Aorta (tissue), 5 donors: ENCODE measurements at regions of chr14 and their contacts with region 1.

Region 1: DNA sequence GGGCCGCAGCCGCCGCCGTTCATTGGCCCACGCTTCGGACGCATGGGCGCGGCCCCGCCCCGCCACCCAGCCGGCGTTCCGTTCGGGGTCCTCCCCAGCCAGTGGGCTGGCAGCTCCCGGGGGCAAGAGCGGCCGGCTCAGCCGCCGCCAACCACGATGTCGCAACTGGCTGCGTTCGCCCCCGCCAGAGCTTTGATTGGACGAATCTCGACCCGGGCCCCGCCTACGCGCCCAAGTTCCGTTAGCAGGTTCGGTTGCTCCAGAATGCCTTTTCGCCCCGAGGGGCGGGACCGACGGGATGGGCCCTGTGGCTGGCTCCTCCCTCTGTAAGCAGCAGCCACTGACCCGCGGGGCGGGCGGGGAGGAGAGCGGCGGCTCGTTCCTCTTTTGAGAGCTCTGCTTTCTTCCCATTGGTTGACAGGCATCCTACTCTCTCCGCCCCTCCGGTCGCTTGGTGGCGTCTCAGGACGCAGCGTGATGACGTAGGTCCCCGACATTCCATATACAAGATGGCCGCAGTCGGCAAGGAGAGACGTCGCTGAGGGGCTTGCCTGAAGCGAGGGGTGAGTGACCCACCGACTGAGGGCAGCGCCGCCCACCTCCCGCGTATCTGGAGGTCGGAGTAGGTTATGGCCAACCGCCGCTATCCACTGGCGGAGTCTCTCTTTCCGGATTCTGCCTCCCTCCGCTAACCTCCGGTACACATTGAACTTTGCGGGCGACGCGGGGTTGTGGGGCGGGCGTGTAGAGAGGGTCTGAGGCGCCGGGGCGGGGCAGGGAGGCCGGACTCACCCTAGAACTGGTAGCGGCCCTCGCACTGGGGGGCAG is at the start of gene CCNK:
- DNase-seq: peak; percentile 100
- ATAC-seq: peak; percentile 99
- H3K4me3 ChIP-seq: peak within 1 kb of the TSS; percentile 89 to 92
- H3K27ac ChIP-seq: peak within 1 kb of the TSS; percentile 88 to 91
- H3K4me1 ChIP-seq: no peaks in the 10 kb centered on the region
- H3K27me3 ChIP-seq: no peaks in the 10 kb centered on the region
- total RNA-seq, gene CCNK: 40.5 to 40.9 TPM

Region 2: GRCh38 chr14:99430465-99430864 is 50.7 kb before region 1 on chr14:
- intact Hi-C with region 1: loop called in 1 of 2 experiments (anchors 2 kb)
- DNase-seq: no peak
- ATAC-seq: no peak
- H3K4me3 ChIP-seq: no peak overlapping the region
- H3K27ac ChIP-seq: no peak overlapping the region
- H3K4me1 ChIP-seq: no peaks in the 10 kb centered on the region
- H3K27me3 ChIP-seq: no peaks in the 10 kb centered on the region

Region 3: DNA sequence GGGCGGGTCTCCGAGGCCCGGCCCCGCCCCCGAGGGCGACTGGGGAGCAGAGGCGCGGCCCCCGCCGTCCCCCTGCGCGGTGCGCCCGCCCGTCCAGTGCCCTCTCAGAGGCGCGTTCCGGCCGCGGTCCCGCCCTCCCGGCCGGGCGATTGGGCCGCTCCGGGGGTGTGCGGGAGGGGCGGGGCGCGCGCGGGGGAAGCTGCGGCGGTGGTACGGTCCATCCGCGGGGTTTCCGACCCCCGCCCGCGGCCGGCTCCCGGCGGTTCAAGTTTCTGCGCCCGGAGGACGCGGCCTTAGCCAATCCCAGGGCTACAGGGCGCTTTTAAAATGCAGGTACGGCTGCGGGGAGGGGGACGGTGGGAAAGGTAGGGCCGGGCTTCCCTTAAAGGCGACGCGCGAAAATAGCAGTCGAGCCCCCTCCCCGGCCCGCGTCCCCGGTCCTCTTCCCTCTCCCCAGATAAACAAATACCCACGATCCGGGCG is 123.2 kb after region 1 on chr14:
- intact Hi-C with region 1: loop called in 1 of 2 experiments (anchors 10 kb)
- DNase-seq: peak; percentile 95 to 96
- ATAC-seq: peak; percentile 97
- H3K4me3 ChIP-seq: peak overlapping the region; percentile 74
- H3K27ac ChIP-seq: peak overlapping the region in 1 of 2 donors; percentile 36
- H3K4me1 ChIP-seq: no peaks in the 10 kb centered on the region
- H3K27me3 ChIP-seq: no peaks in the 10 kb centered on the region